Gastrocnemius medialis (tissue), 4 donors: ENCODE measurements at regions of chr11 and their contacts with region 1.

Region 1: DNA sequence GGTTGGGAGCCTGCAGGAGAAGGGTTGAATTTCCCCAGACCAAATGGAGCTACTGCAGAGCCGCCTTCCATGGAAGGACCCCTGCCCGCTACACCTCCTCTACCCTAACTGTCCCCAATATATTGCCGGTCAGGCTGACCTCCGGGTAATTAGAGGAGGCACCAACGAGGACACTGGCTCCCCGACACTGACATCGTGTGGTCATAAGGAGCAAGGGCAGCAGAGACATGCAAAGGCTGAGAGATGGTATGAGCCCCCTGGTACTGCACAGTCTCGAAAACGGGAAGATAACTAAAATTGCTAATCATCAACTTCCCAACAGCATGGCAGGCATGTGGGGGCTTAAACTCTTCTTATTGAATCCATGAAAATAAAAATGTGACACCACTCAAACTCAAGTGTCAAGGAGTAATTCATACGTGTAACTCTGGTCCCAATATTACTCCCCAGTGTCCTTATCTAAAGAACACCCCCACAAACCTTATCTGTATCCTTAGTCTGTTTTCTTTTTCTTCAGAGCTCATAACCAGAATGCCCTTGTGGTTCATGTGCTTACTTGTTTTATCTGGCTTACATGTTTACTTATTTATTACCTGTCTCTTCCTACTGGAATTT is 4.4 kb downstream of the CAVIN3 start:
- DNase-seq: peak; percentile 41 to 46
- ATAC-seq: peak; percentile 38 to 41
- H3K4me3 ChIP-seq: peak overlapping the region in 3 of 4 donors; percentile 10 to 18 (median 17)
- H3K27ac ChIP-seq: peak overlapping the region in 1 of 4 donors; percentile 22
- H3K4me1 ChIP-seq: peaks cover 19 to 22% of the 10 kb centered on the region in 2 donors
- H3K27me3 ChIP-seq: no peaks in the 10 kb centered on the region
- CTCF ChIP-seq: peak; percentile 57 to 84 (median 76)
- POLR2A ChIP-seq: no peak

Region 2: GRCh38 chr11:5684646-5685362 is 631.1 kb before region 1 on chr11 and contains the start of gene TRIM5:
- in situ Hi-C with region 1: no loop called
- intact Hi-C with region 1: loop called (anchors 10 kb)
- DNase-seq: peak; percentile 67 to 74
- ATAC-seq: peak; percentile 94 to 98
- H3K4me3 ChIP-seq: peak within 1 kb of the TSS; percentile 56 to 67 (median 59)
- H3K27ac ChIP-seq: peak within 1 kb of the TSS; percentile 82 to 88 (median 86)
- H3K4me1 ChIP-seq: peaks cover 7 to 19% of the 10 kb centered on the region in 2 donors
- H3K27me3 ChIP-seq: no peaks in the 10 kb centered on the region
- CTCF ChIP-seq: peak in 3 of 5 experiments; percentile 36 to 56 (median 49)
- POLR2A ChIP-seq: peak; percentile 27 to 67
- total RNA-seq, gene TRIM5: 2.3 to 3.9 (median 2.6) TPM

Region 3: DNA sequence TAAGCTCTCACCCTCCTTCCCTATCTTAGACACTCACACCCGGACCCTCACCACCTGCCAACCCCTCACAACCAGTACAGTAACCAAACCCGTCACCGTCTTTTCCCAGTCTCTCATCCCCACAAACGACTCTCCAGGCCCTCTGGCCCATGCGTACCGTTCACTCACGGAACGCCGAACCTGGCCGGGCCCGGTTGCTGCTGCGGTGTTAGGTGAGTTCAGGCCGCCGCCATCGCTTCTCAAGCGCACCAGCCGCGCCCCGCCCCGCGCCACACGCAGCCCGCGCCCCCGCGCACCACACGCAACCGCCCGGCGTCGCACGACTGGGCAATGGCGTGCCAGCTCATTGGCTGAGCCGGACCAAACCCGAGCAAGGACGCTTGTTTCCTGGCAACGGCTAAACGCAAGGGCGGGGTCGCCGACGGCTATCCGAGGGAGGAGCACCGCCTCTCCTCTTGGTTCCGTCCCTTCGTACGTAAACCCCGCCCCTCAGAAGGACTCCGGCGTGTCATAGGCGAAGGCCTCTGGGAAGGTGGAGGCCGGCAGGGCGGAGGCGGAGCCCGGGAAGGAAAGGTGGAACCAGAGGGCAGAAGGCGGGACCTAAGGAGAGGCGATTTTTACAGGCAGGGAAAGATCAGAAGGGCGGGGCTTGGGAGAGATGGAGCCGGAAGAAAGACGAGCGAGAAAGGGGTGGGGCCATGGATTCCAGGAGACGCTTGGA is 81.4 kb before region 1 on chr11 and contains the start of gene FHIP1B:
- in situ Hi-C with region 1: no loop called
- intact Hi-C with region 1: loop called (anchors 1 kb)
- DNase-seq: peak; percentile 100
- ATAC-seq: peak; percentile 96 to 98
- H3K4me3 ChIP-seq: peak within 1 kb of the TSS; percentile 73 to 79 (median 76)
- H3K27ac ChIP-seq: peak within 1 kb of the TSS; percentile 81 to 88 (median 86)
- H3K4me1 ChIP-seq: peaks cover 14 to 24% of the 10 kb centered on the region in 2 donors
- H3K27me3 ChIP-seq: no peaks in the 10 kb centered on the region
- CTCF ChIP-seq: no peak
- POLR2A ChIP-seq: peak; percentile 47 to 60
- total RNA-seq, gene FHIP1B: 23.9 to 41.7 (median 33.9) TPM

Region 4: DNA sequence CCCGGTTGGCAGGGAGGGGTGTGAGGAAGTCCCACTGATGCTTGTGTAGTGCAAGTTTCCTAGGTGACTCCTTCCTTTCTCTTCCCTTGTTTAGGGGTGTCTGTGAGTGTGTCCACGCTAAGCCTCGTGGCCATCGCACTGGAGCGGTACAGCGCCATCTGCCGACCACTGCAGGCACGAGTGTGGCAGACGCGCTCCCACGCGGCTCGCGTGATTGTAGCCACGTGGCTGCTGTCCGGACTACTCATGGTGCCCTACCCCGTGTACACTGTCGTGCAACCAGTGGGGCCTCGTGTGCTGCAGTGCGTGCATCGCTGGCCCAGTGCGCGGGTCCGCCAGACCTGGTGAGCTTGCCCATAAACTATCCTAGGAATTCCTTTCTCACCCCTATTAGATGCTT is 45.9 kb before region 1 on chr11:
- in situ Hi-C with region 1: no loop called
- intact Hi-C with region 1: no loop called
- DNase-seq: no peak
- ATAC-seq: no peak
- H3K4me3 ChIP-seq: no peak overlapping the region
- H3K27ac ChIP-seq: no peak overlapping the region
- H3K4me1 ChIP-seq: peaks cover 18 to 20% of the 10 kb centered on the region in 2 donors
- H3K27me3 ChIP-seq: no peaks in the 10 kb centered on the region
- CTCF ChIP-seq: no peak
- POLR2A ChIP-seq: no peak

Region 5: GRCh38 chr11:6362873-6363678 is 47.2 kb after region 1 on chr11:
- in situ Hi-C with region 1: no loop called
- intact Hi-C with region 1: loop called (anchors 1 kb)
- DNase-seq: peak; percentile 77 to 89
- ATAC-seq: peak; percentile 84 to 85
- H3K4me3 ChIP-seq: peak overlapping the region in 2 of 4 donors; percentile 1 to 32
- H3K27ac ChIP-seq: peak overlapping the region; percentile 83 to 89 (median 86)
- H3K4me1 ChIP-seq: peaks cover 7% of the 10 kb centered on the region in 2 donors
- H3K27me3 ChIP-seq: no peaks in the 10 kb centered on the region
- CTCF ChIP-seq: peak; percentile 86 to 92 (median 89)
- POLR2A ChIP-seq: no peak

Region 6: GRCh38 chr11:6619004-6619745 is 303.3 kb after region 1 on chr11 and contains the start of gene TPP1:
- in situ Hi-C with region 1: no loop called
- intact Hi-C with region 1: loop called (anchors 5 kb)
- DNase-seq: peak; percentile 90 to 93
- ATAC-seq: peak; percentile 100
- H3K4me3 ChIP-seq: peak within 1 kb of the TSS; percentile 65 to 84 (median 74)
- H3K27ac ChIP-seq: peak within 1 kb of the TSS; percentile 80 to 94 (median 90)
- H3K4me1 ChIP-seq: peaks cover 15 to 16% of the 10 kb centered on the region in 2 donors
- H3K27me3 ChIP-seq: no peaks in the 10 kb centered on the region
- CTCF ChIP-seq: no peak
- POLR2A ChIP-seq: peak; percentile 68 to 85
- total RNA-seq, gene TPP1: 13.9 to 43.4 (median 19.6) TPM

Region 7: GRCh38 chr11:6693342-6694228 is 377.7 kb after region 1 on chr11:
- in situ Hi-C with region 1: no loop called
- intact Hi-C with region 1: no loop called
- DNase-seq: peak; percentile 18 to 41
- ATAC-seq: no peak
- H3K4me3 ChIP-seq: no peak overlapping the region
- H3K27ac ChIP-seq: peak overlapping the region in 3 of 4 donors; percentile 28 to 76 (median 55)
- H3K4me1 ChIP-seq: peaks cover 19 to 25% of the 10 kb centered on the region in 2 donors
- H3K27me3 ChIP-seq: no peaks in the 10 kb centered on the region
- CTCF ChIP-seq: no peak
- POLR2A ChIP-seq: no peak